Aorta (tissue), 5 donors: ENCODE measurements at regions of chr10 and their contacts with region 1.

Region 1: GRCh38 chr10:75655791-75656451 is 224.5 kb downstream of the LRMDA start:
- DNase-seq: peak in 1 of 2 donors; percentile 54
- ATAC-seq: peak; percentile 75
- H3K4me3 ChIP-seq: no peak overlapping the region
- H3K27ac ChIP-seq: peak overlapping the region in 1 of 2 donors; percentile 75
- H3K4me1 ChIP-seq: peaks cover 0 to 7% of the 10 kb centered on the region in 2 donors
- H3K27me3 ChIP-seq: no peaks in the 10 kb centered on the region

Region 2: DNA sequence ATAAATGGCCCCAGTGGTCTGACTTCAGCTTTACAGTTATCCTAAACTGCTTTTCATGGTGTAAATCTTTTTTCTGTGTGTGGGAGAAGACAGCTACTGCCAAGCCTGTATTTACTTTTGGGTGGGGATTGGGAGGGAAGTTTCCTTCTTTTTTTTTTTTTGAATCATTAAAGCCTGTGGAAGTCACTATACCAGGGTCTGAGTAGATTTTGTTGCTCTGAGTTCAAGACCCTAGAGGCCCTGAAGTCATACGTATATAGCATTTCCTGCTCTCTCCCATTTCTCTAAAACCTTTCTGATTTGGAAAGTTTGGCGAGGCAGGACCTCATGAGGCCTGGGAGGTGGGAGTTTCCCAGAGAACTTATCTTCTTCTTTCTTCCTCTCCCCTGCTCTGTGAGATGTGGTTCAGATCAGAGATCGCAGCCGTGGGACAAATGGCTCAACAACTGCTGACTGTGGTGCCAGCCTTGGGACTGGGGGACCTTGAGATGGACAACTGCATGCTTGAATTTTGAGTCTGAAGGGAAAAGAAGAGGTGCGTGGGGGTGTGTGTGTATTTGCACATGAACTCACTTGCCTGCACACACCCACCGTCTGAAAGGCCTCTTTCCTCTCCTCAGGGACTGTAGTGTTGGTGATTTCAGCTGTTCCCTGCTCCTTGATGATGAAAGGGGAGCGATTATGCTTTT is 206.4 kb before region 1 on chr10:
- intact Hi-C with region 1: no loop called
- DNase-seq: no peak
- ATAC-seq: no peak
- H3K4me3 ChIP-seq: no peak overlapping the region
- H3K27ac ChIP-seq: no peak overlapping the region
- H3K4me1 ChIP-seq: no peaks in the 10 kb centered on the region
- H3K27me3 ChIP-seq: no peaks in the 10 kb centered on the region

Region 3: GRCh38 chr10:75547391-75548298 is 108.3 kb before region 1 on chr10:
- intact Hi-C with region 1: loop called in 1 of 2 experiments (anchors 5 kb)
- DNase-seq: no peak
- ATAC-seq: no peak
- H3K4me3 ChIP-seq: no peak overlapping the region
- H3K27ac ChIP-seq: peak overlapping the region; percentile 25 to 60
- H3K4me1 ChIP-seq: peaks cover 0 to 7% of the 10 kb centered on the region in 2 donors
- H3K27me3 ChIP-seq: no peaks in the 10 kb centered on the region